Activated T-helper 1 cell treated with anti-CD3 and anti-CD28 coated beads, Interleukin-12 subunit alpha, Interleukin-12 subunit beta, Interleukin-2, Interleukin-4 antibody, amounts not matched to agents 30 ng/mL and 10 ng/mL and 1 ng/mL, durations not matched to agents 14 hours and 24 hours and 36 hours (primary cell): ENCODE measurements at regions of chr9 and their contacts with region 1.

Region 1: DNA sequence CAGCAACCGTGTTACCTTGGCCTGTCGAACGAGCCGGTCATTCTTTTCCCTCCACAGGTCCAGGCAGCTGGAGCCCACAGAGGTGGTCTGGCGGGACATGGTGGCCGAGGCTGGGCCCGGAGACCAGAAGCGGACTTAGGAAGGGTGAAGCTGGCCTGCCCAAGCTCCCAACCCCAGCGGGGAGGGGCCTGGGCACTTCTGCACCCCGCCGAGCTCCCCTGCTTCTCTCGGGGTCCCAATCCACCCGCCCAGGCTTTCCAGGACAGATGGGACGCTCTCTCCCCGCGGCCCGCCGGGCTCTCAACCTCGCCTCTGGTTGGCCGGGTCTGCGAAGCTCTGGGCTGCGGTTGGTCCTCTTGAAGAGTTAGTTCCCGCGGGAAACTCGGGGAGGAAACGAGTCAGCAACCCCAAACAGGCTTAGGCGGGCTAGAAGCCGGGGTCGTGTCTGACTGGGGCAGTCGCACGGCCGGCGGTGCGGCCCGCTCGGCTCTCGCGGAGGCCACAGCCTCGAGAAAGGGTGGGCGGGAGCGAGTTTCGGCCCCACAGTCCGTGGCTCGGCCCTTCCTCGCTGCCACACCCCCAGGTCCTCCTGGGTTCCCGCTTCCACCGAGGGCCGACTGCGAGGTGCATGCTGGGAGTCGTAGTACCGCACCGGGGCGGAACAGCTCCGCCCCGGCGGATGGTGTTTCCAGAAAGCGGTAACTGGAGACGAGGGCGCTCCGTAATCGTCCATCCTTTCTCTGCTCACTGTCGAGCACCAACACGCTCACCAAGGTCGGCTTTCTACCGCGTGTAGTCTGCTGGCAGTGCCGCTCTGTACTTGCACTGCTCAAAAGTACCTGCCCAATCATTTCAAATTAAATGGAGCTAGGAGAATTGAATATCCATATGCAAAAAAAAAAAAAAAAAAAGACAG is at the start of gene FANCG:
- DNase-seq: peak; percentile 86
- H3K4me3 Mint-ChIP-seq: peak within 1 kb of the TSS; percentile 96
- H3K27ac Mint-ChIP-seq: peak within 1 kb of the TSS; percentile 98
- H3K4me1 Mint-ChIP-seq: peaks cover 32% of the 10 kb centered on the region
- H3K27me3 Mint-ChIP-seq: no peaks in the 10 kb centered on the region
- total RNA-seq, gene FANCG: 102 and 104 TPM in 2 replicates

Region 2: DNA sequence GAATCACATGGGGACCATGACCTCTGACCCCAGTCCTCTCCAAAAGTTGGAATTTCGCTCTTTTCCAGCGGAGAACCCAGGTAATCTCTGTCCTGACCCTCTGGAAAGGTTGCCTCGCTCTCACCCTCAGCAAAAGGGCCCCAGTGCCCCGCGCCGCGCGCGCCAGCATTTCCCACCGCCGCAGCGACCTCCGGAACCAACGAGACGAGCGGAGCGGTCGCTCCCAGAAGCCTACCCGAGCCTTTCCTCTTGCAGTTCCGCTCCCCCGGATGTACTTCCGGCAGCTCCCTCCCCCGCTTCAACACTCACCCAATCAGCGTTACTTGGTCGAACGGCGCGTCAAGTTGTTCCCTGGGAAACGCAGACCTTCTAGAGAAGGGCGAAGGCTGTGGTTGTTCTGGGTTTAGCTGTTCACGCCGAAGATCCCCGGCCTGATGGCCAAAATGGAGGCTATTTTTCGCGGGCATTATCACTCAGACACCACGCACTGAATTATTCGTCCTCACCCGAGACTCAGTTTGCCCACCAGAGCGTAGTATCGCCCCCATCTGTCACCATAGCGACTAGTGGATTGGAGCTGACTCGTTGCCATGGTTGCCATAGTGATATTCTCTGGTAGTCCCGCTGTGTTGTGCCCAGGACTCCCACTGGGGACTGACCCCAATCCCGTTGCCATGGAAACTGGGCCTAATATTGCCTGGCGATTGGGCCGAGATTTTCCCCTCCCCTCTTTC is 23.4 kb after region 1 on chr9 and contains the start of gene STOML2:
- intact Hi-C with region 1: loop called (anchors 1 kb)
- DNase-seq: peak; percentile 89
- H3K4me3 Mint-ChIP-seq: peak within 1 kb of the TSS; percentile 87
- H3K27ac Mint-ChIP-seq: peak within 1 kb of the TSS; percentile 88
- H3K4me1 Mint-ChIP-seq: peaks cover 28% of the 10 kb centered on the region
- H3K27me3 Mint-ChIP-seq: no peaks in the 10 kb centered on the region
- total RNA-seq, gene STOML2: 250 and 261 TPM in 2 replicates